ENCODE measurements at regions of chr1 and their contacts with region 1.

Region 1: GRCh38 chr1:94854458-94855306 is 34.5 kb downstream of the SLC44A3 start:
- DNase-seq: peak; percentile 55
- H3K4me3 ChIP-seq: peak overlapping the region; percentile 56
- CTCF ChIP-seq: peak; percentile 94

Region 2: GRCh38 chr1:94832446-94832845 is 22.2 kb before region 1 on chr1:
- CTCF ChIA-PET with region 1: interaction called, 20 read pairs
- POLR2A ChIA-PET with region 1: no interaction called
- DNase-seq: no peak
- H3K4me3 ChIP-seq: no peak overlapping the region
- CTCF ChIP-seq: no peak

Region 3: DNA sequence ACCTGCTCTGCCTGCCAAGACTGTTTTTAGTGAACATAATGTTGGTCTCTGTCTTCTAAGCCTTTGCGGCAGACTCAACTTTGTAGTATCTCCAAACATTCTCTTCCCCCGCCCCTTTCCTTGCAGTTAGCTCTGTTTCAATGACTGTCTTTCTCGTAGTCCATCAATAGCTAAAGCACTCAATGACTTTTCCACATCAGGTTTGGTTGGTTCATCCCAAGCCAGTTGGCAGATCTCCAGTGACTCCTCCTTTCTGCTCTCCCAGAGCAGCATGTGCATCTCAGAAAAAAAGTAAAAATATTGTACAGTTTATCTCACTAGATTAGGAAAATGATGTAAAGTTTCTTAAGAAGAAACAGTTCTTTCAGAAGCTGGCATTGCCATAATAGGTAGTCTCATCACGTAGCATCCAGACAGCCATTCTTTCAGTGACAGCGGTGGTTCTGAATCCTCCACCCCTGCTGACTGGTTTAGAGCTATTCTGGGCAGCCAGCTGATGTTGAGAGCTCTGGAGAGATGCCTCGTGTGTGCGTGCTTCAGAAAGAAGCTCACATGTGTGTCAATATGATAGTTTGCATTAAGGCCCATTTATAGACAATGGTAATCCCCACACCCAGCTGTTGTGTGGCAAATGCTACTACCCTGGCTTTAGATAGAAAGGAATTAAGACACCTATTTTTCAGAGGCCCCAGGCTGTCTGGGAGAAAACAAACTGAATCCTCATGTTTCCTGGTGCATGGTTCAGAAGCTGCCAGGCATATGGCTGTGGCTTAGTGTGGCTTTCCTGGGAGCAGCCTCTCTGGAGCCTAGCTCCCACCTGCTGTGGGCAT is 19.1 kb after region 1 on chr1:
- CTCF ChIA-PET with region 1: interaction called, 84 read pairs
- POLR2A ChIA-PET with region 1: interaction called, 3 read pairs
- DNase-seq: no peak
- H3K4me3 ChIP-seq: no peak overlapping the region
- CTCF ChIP-seq: no peak

Region 4: DNA sequence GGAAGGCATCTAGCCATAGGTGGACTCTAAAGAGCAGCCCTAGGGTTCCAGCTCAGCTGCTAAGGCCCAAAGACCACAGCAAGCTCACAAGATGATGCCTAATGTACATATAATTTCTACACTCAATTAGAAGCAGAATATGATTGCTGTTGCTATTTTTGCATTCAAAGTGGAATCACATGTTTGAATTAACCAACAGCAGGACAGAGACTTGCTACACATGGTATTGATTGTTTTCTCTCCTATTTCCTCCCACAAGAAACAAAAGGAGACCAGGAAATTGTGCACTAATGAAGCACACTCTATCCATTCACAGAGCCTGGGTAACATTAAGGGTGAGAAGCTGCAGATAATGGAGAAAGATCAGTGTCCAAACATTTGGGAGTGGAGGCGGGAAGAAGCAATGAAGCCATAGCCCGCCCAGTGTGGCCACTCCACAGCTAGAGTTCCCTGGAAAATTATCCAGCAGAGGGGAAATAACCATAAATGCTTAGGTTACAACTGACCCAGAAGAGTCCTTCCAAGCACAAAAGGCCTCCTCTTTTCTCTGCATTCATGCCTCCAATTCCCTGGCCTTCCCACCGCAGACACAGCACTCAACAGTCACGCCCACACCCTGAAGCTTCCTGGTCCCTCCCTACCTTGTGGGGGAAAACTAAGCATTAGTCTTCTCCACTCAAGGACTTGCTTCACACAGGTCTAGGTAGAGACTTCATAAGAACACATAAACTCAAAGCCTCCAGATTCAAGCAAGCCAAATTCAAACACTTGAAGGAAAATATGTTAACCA is 64.8 kb after region 1 on chr1:
- CTCF ChIA-PET with region 1: interaction called, 63 read pairs
- POLR2A ChIA-PET with region 1: interaction called, 6 read pairs
- DNase-seq: no peak
- H3K4me3 ChIP-seq: no peak overlapping the region
- CTCF ChIP-seq: no peak

Region 5: DNA sequence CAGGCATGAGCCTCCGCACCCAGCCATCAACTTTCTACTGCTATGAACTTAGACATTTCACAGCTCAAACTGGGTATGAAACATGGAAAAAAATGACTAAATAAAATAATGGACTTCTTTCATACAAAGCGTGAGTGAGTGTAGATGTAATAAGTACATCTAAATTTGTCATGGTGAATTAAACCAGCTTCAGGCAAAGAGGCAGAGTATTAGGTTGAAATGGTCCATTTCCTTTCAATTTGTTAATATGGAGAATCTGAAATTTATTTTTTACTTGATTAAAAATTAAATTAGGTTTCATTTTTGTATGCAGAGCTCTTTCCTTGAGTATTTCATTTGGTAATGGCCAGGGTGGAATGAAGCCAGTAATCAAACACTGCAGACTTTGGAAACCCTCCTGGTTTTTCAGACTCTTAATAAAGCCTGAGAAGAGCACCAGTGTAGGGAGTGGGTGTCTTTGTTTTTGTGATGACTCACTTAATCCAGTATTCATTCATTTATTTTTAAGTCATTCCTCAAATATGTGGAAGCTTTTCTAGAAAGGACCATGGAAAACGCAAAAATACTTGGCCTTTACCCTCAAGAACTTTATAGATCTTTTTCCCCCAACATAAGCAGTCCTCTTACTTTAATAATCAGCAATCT is 168.8 kb after region 1 on chr1:
- CTCF ChIA-PET with region 1: interaction called, 31 read pairs
- POLR2A ChIA-PET with region 1: no interaction called
- DNase-seq: peak; percentile 75
- H3K4me3 ChIP-seq: no peak overlapping the region
- CTCF ChIP-seq: no peak